Spleen (tissue), 13 donors: ENCODE measurements at regions of chr17 and their contacts with region 1.

Region 1: DNA sequence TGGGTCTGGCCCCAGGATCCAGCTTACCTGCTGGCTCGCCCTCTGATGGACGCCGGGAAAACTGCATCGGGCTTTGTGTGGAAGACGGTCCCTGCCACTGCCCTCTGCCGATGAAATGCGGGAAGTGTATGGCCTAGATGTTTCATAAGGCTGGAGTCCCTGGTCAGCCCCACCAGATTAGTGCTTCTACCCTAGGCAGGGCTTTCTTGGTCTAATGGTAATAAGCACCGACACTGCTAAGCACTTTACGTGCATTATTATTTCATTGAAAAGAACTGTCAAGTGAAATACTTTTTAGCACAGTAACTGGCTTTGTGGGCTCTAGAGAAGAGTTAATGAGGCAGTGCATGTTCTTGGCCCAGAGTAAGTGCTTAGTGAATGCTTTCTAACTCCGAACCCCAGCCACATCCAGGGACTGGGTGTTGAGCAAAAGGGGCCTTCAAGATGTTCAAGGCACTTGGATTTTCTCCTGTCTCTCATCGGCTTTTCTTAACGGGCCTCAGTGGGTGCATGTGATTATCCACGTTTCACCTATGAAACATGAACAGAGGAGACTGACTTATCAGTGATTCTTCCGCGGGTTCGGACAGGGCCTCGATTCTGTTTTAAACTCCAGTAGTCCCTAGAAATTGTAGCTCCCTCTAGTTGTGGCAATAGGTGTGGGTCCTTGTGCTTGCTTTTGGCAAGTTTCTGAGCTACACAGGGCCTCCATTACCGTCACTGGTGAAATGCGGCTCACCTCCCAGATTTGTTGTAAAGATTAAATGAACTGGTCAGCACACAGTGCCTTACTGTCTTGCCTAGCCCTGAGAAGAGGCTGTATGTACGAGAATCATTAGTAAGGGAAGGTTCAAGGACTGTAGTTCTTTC is 6.6 kb downstream of the TRAF4 start:
- DNase-seq: peak; percentile 96
- H3K4me3 ChIP-seq: no peak overlapping the region
- H3K27ac ChIP-seq: peak overlapping the region in 5 of 8 donors; percentile 33 to 96 (median 94)
- H3K4me1 ChIP-seq: peaks cover 31 to 60% (median 42%) of the 10 kb centered on the region in 6 donors
- H3K27me3 ChIP-seq: peaks cover 0 to 3% (median 0%) of the 10 kb centered on the region in 7 donors
- CTCF ChIP-seq: peak; percentile 98 to 100 (median 99)
- POLR2A ChIP-seq: no peak

Region 2: DNA sequence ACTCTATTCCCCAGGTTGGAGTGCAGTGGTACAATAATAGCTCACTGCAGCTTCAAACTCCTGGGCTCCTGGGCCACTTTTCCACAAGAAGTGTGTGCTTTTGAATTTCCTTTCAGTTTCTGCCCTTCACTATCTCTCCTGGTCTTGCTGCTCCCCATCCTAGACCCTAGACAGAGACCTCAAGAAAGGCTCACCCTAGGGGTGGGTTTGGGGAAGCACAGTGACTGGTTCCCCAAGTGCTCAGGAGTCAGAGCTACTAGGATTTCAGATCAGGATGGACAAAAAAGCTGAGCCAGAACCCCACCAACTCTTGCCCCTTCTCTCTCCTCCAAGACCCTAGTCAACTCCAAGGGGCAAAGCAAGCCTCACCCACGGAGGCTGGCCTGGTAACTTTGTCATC is 383.8 kb before region 1 on chr17:
- intact Hi-C with region 1: no loop called
- DNase-seq: no peak
- H3K4me3 ChIP-seq: no peak overlapping the region
- H3K27ac ChIP-seq: no peak overlapping the region
- H3K4me1 ChIP-seq: peaks cover 0 to 21% (median 13%) of the 10 kb centered on the region in 6 donors
- H3K27me3 ChIP-seq: peaks cover 0 to 1% (median 0%) of the 10 kb centered on the region in 7 donors
- CTCF ChIP-seq: no peak
- POLR2A ChIP-seq: no peak

Region 3: GRCh38 chr17:28726226-28727130 is 23.9 kb before region 1 on chr17 and contains the start of gene TLCD1:
- intact Hi-C with region 1: loop called (anchors 2 kb)
- DNase-seq: peak; percentile 99
- H3K4me3 ChIP-seq: peak within 1 kb of the TSS; percentile 64 to 92 (median 74)
- H3K27ac ChIP-seq: peak within 1 kb of the TSS; percentile 51 to 99 (median 98)
- H3K4me1 ChIP-seq: peaks cover 32 to 81% (median 72%) of the 10 kb centered on the region in 6 donors
- H3K27me3 ChIP-seq: no peaks in the 10 kb centered on the region
- CTCF ChIP-seq: peak; percentile 98 to 100 (median 100)
- POLR2A ChIP-seq: no peak
- total RNA-seq, gene TLCD1: 0.97 to 2.6 (median 2.0) TPM in 6 of 7 donors, not detected in the other